Endothelial cell of umbilical vein (primary cell): ENCODE measurements at regions of chr6 and their contacts with region 1.

Region 1: GRCh38 chr6:36780442-36781177 is 58.6 kb downstream of the CPNE5 start:
- DNase-seq: no peak
- H3K4me3 ChIP-seq: no peak overlapping the region
- H3K27ac ChIP-seq: no peak overlapping the region
- H3K4me1 ChIP-seq: no peaks in the 10 kb centered on the region
- H3K27me3 ChIP-seq: no peaks in the 10 kb centered on the region
- CTCF ChIP-seq: no peak
- POLR2A ChIP-seq: no peak

Region 2: DNA sequence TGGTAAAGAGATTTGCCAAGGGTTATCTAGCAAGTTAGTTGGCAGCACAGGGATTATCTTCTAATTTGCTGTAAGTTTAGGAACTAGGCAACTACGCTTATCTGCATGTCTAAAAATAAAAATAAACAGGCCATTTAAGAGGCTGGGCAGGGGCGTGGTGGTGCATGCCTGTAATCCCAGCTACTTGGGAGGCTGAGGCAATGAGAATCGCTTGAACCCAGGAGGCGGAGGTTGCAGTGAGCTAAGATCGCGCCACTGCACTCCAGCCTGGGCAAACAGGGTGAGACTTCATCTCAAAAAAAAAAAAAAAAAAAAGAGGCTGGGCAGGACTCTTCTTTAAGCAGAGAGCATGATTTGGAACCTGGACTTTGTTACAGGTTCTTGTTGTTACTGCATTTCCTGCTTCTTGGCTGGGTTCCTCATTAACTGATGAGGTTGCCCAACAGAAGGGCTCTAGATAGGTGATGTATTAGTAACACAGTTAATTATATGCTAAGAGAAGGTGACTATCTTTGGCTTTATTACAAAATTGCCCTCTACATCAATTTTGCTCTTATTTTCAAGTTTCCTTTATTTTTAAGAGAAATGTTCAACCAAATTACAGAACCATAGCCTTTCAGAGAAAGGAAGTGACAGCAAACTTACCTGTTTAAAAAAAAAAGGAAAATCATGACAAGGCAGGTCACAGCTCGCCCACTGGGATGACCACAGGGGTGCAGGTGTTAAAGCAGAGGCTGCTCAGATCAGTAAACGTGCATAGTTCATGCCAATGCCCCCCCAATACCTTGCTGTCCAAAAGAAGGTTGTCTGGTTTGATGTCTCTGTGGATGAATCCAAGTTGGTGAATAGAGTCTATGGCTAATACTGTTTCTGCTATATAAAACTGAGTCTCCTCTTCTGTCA is 265.8 kb before region 1 on chr6:
- CTCF ChIA-PET with region 1: no interaction called
- POLR2A ChIA-PET with region 1: no interaction called
- dilution Hi-C with region 1: no loop called
- intact Hi-C with region 1: no loop called
- DNase-seq: no peak
- H3K4me3 ChIP-seq: no peak overlapping the region
- H3K27ac ChIP-seq: no peak overlapping the region
- H3K4me1 ChIP-seq: no peaks in the 10 kb centered on the region
- H3K27me3 ChIP-seq: no peaks in the 10 kb centered on the region
- CTCF ChIP-seq: no peak
- POLR2A ChIP-seq: no peak

Region 3: DNA sequence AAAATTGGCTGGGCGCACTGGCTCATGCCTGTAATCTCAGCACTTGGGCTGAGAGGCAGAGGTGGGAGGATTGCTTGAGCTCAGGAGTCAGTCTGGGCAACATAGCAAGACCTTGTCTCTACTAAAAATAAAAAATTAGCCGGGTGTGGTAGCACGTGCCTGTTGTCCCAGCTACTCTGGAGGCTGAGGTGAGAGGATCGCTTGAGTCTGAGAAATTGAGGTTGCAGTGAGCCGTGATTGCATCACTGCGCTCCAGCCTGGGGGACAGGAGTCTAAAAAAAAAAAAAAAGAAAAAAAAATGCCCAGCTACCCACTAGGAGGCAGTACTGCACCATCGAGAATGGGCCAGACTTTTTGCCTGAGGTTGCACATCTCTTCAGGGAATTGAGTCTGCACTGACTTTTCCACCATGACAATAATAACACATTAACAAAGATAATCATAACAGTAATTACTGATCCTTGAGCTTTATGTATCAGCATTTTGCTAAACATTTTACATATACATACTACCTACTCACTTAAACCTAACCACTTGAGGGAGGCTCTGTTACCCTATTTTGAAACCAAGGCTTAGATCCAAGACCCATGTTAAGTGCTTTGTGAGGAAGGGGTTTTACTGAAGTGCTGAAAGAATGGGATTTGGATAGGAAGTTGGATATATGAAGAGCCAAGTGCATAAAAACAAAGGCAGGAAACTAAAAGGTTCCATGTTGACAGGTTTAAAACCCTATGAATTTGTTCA is 165.4 kb before region 1 on chr6:
- CTCF ChIA-PET with region 1: interaction called, 13 read pairs
- POLR2A ChIA-PET with region 1: no interaction called
- dilution Hi-C with region 1: no loop called
- intact Hi-C with region 1: no loop called
- DNase-seq: peak; percentile 85
- H3K4me3 ChIP-seq: no peak overlapping the region
- H3K27ac ChIP-seq: no peak overlapping the region
- H3K4me1 ChIP-seq: peaks cover 17% of the 10 kb centered on the region
- H3K27me3 ChIP-seq: no peaks in the 10 kb centered on the region
- CTCF ChIP-seq: peak; percentile 65 to 74
- POLR2A ChIP-seq: no peak

Region 4: GRCh38 chr6:36745836-36746235 is 34.8 kb before region 1 on chr6:
- CTCF ChIA-PET with region 1: no interaction called
- POLR2A ChIA-PET with region 1: no interaction called
- dilution Hi-C with region 1: no loop called
- intact Hi-C with region 1: no loop called
- DNase-seq: no peak
- H3K4me3 ChIP-seq: no peak overlapping the region
- H3K27ac ChIP-seq: no peak overlapping the region
- H3K4me1 ChIP-seq: peaks cover 6% of the 10 kb centered on the region
- H3K27me3 ChIP-seq: no peaks in the 10 kb centered on the region
- CTCF ChIP-seq: no peak
- POLR2A ChIP-seq: no peak

Region 5: DNA sequence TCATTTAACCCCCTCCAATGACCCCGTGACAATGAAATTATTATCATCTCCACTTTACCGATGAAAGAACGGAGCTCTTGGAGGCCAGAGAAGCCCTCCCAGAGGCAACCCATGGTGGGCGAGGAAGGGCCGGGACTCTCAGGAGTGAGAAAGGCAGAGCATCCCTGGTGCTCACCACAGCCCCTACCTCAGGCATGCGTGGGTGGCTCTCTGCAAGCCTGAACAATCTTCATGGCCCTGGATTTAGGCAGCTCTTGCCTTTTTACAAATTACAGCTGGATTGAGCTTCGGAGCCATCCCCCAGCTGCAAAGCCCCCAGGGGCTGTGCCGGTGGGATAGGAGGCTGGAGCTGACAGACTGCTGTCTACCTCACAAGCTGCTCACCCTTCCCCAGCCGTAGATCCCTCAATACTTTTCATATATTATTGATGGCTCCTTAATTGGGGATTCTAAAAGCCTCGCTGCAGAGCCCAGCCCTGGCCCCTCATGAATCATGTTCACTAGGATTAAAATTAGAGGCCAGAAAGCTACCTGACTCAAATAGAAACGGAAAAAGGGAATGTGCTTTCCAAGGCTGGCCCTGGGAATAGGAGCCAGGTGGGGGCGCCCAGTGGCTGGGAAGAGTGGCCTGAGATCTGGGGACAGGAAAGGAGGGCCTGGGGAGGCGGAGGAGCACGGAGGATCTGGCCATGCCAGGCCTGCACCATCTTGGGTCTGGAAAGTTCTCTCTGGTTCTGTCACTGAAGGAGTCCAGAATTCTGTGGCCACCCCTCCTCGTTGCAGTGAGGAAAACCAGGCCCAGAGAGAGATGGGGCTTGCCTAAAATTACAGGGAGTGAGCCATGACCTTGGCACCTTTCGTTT is 29.6 kb after region 1 on chr6:
- CTCF ChIA-PET with region 1: interaction called, 15 read pairs
- POLR2A ChIA-PET with region 1: no interaction called
- dilution Hi-C with region 1: no loop called
- intact Hi-C with region 1: no loop called
- DNase-seq: no peak
- H3K4me3 ChIP-seq: no peak overlapping the region
- H3K27ac ChIP-seq: no peak overlapping the region
- H3K4me1 ChIP-seq: peaks cover 4% of the 10 kb centered on the region
- H3K27me3 ChIP-seq: no peaks in the 10 kb centered on the region
- CTCF ChIP-seq: peak in 1 of 2 donors; percentile 26
- POLR2A ChIP-seq: no peak

Region 6: GRCh38 chr6:36815962-36816735 is 35.5 kb after region 1 on chr6:
- CTCF ChIA-PET with region 1: interaction called, 15 read pairs
- POLR2A ChIA-PET with region 1: no interaction called
- dilution Hi-C with region 1: no loop called
- intact Hi-C with region 1: no loop called
- DNase-seq: no peak
- H3K4me3 ChIP-seq: no peak overlapping the region
- H3K27ac ChIP-seq: no peak overlapping the region
- H3K4me1 ChIP-seq: peaks cover 8% of the 10 kb centered on the region
- H3K27me3 ChIP-seq: no peaks in the 10 kb centered on the region
- CTCF ChIP-seq: no peak
- POLR2A ChIP-seq: no peak

Region 7: DNA sequence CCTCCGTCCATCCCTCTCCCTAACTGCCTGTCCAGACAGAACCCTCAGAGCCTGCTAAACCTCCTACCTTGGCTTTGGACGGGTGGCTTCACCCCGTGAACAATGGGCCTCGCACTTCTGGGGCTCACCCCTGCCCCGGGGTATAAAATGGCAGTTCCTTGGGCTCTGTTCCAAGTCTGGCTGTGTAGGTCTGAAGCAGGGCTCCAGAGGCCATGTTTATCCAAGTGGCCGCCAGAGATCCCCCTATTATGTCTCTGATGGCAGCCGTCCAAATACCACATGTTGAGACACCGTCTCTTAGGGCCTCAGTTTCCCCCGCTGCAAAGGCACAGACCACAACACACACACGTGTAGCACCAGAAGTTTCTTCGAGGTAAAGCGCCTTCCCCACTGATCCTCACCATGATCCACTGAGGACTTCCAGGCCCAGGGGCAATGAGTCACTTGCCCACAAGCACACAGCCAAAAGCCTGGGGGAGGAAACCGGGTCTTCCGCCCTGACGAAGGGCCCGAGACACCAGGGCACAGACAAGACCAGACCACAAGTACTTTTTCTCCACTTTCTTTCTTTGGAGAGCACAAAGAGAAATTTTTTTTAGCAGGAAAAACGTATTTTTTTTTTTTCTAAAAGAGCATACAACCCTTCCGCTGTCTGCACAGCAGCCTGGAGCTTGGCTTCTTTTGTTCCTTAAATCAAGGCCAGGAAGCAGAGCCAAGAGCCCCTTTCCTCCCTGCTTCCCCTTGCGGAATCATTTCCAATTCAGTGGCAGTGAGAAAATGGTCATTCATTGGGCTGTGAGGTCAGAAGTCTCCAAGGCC is 46.9 kb after region 1 on chr6:
- CTCF ChIA-PET with region 1: interaction called, 14 read pairs
- POLR2A ChIA-PET with region 1: no interaction called
- dilution Hi-C with region 1: no loop called
- intact Hi-C with region 1: no loop called
- DNase-seq: peak; percentile 99
- H3K4me3 ChIP-seq: peak overlapping the region in 1 of 3 experiments; percentile 13
- H3K27ac ChIP-seq: peak overlapping the region; percentile 100
- H3K4me1 ChIP-seq: peaks cover 72% of the 10 kb centered on the region
- H3K27me3 ChIP-seq: no peaks in the 10 kb centered on the region
- CTCF ChIP-seq: no peak
- POLR2A ChIP-seq: peak; percentile 59

Region 8: DNA sequence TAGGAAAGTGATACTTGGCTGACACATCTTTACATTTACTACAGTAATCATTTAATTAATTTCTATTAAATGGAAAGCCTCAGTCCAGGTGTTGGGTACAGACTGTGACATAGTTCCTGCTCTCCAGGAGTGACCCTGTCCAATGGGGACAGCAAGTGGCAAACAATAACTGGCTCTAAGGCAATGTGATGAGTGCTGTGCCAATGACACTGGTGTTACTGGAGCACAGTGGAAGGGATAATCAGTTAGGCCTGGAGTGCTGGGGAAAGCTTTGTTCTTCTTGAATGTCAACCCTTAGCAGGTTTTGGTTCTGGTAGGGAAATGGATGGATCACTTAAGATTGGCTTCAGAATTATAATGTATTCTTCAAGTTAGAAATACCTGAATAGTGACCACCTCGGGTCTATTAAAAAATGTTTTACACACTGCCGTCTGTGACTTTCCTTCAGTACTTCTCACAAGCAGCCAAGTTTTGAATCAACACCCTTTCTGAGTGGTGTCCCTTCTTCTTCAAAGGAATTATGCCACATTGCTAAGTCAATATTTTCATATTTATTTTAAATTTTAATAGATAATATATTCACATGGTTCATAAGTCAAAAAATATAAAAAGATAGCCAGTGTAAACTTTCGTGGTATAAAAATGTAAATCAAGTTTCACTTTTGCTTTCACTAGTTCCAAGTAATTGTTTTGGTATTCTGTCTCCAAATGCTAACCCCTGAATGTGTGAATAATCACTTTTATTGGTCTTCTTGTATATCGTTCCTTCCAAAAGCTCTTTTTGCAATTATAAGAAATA is 662.0 kb after region 1 on chr6:
- CTCF ChIA-PET with region 1: no interaction called
- POLR2A ChIA-PET with region 1: no interaction called
- dilution Hi-C with region 1: no loop called
- intact Hi-C with region 1: no loop called
- DNase-seq: peak; percentile 26
- H3K4me3 ChIP-seq: no peak overlapping the region
- H3K27ac ChIP-seq: no peak overlapping the region
- H3K4me1 ChIP-seq: no peaks in the 10 kb centered on the region
- H3K27me3 ChIP-seq: no peaks in the 10 kb centered on the region
- CTCF ChIP-seq: no peak
- POLR2A ChIP-seq: no peak

Region 9: DNA sequence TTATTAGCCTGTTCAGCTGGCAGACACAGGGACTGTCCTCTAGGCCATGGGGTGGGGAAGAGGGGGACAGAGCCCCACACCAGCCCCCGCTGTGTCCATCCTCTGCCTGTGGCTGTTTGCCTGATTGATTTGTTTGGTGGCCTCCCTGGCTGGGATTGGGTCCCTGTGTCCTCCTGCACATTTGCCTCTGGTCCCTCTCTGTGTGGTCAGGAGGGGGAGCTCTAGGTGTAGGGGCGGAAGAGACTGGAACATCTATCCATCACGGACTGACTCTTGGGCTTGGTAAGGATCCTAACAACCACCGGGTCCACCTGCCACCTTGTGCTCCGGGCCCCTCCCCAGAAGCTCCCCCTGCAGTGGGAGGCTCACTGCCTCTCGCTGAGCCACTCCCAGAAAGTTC is 757.5 kb after region 1 on chr6:
- CTCF ChIA-PET with region 1: no interaction called
- POLR2A ChIA-PET with region 1: no interaction called
- dilution Hi-C with region 1: no loop called
- intact Hi-C with region 1: no loop called
- DNase-seq: peak; percentile 20
- H3K4me3 ChIP-seq: no peak overlapping the region
- H3K27ac ChIP-seq: no peak overlapping the region
- H3K4me1 ChIP-seq: peaks cover 7% of the 10 kb centered on the region
- H3K27me3 ChIP-seq: peaks cover 47 to 48% of the 10 kb centered on the region in 2 experiments
- CTCF ChIP-seq: peak; percentile 33 to 53
- POLR2A ChIP-seq: no peak